ENCODE measurements at regions of chr16 and their contacts with region 1.

Region 1: GRCh38 chr16:86563489-86564345 is 2.9 kb upstream of the FOXC2 start:
- DNase-seq: peak; percentile 81
- H3K4me3 ChIP-seq: peak overlapping the region; percentile 11 to 38 (median 12)
- H3K27ac ChIP-seq: no peak overlapping the region
- H3K4me1 ChIP-seq: peaks cover 11% of the 10 kb centered on the region
- H3K27me3 ChIP-seq: no peaks in the 10 kb centered on the region
- CTCF ChIP-seq: peak; percentile 100

Region 2: GRCh38 chr16:86609115-86609514 is 45.4 kb after region 1 on chr16:
- CTCF ChIA-PET with region 1: no interaction called
- dilution Hi-C with region 1: no loop called
- in situ Hi-C with region 1: no loop called
- intact Hi-C with region 1: no loop called
- DNase-seq: no peak
- H3K4me3 ChIP-seq: no peak overlapping the region
- H3K27ac ChIP-seq: no peak overlapping the region
- H3K4me1 ChIP-seq: no peaks in the 10 kb centered on the region
- H3K27me3 ChIP-seq: no peaks in the 10 kb centered on the region
- CTCF ChIP-seq: no peak

Region 3: GRCh38 chr16:86951831-86952598 is 388.3 kb after region 1 on chr16:
- CTCF ChIA-PET with region 1: no interaction called
- dilution Hi-C with region 1: no loop called
- in situ Hi-C with region 1: no loop called
- intact Hi-C with region 1: loop called (anchors 1 kb)
- DNase-seq: peak; percentile 92
- H3K4me3 ChIP-seq: no peak overlapping the region
- H3K27ac ChIP-seq: peak overlapping the region; percentile 17
- H3K4me1 ChIP-seq: peaks cover 30% of the 10 kb centered on the region
- H3K27me3 ChIP-seq: no peaks in the 10 kb centered on the region
- CTCF ChIP-seq: no peak

Region 4: GRCh38 chr16:87062569-87063442 is 499.1 kb after region 1 on chr16:
- CTCF ChIA-PET with region 1: interaction called, 3 read pairs
- dilution Hi-C with region 1: no loop called
- in situ Hi-C with region 1: loop called (anchors 5 to 10 kb)
- intact Hi-C with region 1: loop called (anchors 1 kb)
- DNase-seq: peak; percentile 28
- H3K4me3 ChIP-seq: peak overlapping the region in 1 of 3 experiments; percentile 29
- H3K27ac ChIP-seq: no peak overlapping the region
- H3K4me1 ChIP-seq: no peaks in the 10 kb centered on the region
- H3K27me3 ChIP-seq: no peaks in the 10 kb centered on the region
- CTCF ChIP-seq: peak; percentile 70 to 86

Region 5: DNA sequence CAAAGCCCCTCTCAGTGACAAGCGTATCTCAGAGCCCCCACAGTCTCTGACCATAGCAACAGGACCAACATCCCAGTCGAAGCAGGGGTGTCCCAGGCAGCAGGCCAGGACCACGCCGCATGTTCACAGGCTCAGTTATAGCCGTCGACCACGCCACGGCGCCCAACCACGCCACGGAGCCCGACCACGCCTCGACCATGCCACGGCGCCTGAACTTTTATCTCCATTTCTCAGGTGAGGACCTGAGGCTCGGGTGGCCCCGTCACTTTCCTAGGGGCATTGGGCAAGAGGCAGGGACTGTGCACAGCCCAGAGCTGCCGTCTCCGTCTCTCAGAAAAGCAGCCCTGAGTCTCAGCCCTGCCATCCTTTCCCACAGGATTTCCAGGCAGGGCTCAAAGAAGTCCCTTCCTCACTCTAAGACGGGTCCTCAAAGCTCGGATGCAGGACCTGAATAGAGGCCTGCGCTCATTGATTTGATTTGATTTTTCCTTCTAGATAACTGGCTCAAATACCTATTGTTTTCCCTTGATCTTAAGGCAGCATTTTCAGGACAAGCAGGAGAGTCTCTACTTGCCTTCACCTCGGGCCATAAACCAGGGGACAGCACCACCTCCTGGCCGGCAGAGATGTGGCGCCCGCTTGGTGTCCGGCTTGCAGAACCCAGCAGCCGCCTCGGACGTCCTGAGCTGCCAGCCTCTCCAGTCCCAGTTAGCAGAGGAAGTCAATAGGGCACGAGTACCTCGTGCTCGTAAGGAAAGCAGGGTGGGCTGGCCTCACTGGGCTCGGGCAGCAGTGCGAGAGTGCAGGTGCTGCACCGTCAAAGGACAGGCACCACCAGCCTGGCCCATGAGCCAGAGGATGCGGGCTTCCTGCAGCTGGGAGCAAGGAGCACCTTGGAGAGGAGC is 714.7 kb after region 1 on chr16:
- CTCF ChIA-PET with region 1: no interaction called
- dilution Hi-C with region 1: no loop called
- in situ Hi-C with region 1: loop called (anchors 10 kb)
- intact Hi-C with region 1: loop called (anchors 1 kb)
- DNase-seq: peak; percentile 58
- H3K4me3 ChIP-seq: no peak overlapping the region
- H3K27ac ChIP-seq: no peak overlapping the region
- H3K4me1 ChIP-seq: no peaks in the 10 kb centered on the region
- H3K27me3 ChIP-seq: no peaks in the 10 kb centered on the region
- CTCF ChIP-seq: peak; percentile 85 to 93

Region 6: DNA sequence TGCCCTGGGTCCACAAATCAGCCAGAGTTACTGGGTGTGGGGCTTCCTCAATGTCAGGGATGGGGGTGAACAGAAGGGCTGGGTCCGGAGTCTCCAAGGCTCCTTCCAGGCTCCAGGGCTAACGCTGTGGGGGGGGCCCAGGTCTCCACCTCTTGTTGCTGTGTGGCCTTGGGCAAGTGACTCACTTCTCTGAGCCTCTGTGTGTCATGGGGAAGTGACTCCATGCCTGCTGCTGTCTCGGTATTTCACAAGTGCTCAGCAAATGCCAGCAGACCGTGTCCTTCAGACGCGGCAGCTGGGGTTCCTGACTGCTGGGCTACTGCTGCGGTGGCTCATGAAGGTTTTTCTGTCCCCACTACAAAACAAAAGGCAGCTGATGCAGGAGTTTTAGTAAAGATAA is 1065.2 kb after region 1 on chr16:
- CTCF ChIA-PET with region 1: no interaction called
- dilution Hi-C with region 1: no loop called
- in situ Hi-C with region 1: no loop called
- intact Hi-C with region 1: loop called (anchors 5 kb)
- DNase-seq: peak; percentile 50
- H3K4me3 ChIP-seq: no peak overlapping the region
- H3K27ac ChIP-seq: no peak overlapping the region
- H3K4me1 ChIP-seq: peaks cover 20% of the 10 kb centered on the region
- H3K27me3 ChIP-seq: no peaks in the 10 kb centered on the region
- CTCF ChIP-seq: no peak